GM12878 (cell line): ENCODE measurements at regions of chr11 and their contacts with region 1.

Region 1: DNA sequence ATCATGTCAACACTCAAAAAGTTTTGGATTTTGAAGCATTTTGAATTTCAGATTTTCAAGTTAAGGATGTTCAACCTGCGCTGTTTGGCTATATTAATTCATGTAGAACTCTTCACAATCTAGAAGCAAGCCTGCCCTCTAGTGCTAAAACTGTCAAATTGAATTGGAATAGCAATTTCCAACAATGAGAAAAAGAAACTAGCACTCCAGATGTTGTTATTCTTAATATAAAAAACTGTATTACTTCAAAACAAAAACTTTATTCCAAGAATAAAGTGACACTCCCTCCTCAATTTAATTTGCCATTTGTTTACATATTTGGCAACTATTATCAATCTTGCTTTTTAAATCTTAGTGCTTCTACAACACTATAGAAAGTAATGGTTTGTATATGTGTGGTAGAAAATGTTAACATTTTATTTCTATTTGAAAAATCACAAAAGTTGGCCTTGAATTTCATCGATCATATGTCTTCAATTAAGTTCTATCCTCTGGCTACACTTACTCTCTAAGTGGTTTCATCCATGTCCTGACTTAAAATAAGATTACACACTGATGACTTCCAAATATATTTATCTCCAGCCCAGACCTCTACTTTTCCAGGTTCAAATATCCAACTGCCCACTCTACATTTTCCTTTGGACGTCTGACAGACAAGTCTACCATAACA is 36.6 kb downstream of the DCUN1D5 start:
- DNase-seq: no peak
- ATAC-seq: peak; percentile 87
- H3K4me3 ChIP-seq: no peak overlapping the region
- H3K27ac ChIP-seq: no peak overlapping the region
- H3K4me1 ChIP-seq: no peaks in the 10 kb centered on the region
- H3K27me3 ChIP-seq: no peaks in the 10 kb centered on the region
- CTCF ChIP-seq: peak; percentile 58 to 68 (median 58)
- EP300 ChIP-seq: no peak
- POLR2A ChIP-seq: no peak
- RAD21 ChIP-seq: peak; percentile 73

Region 2: DNA sequence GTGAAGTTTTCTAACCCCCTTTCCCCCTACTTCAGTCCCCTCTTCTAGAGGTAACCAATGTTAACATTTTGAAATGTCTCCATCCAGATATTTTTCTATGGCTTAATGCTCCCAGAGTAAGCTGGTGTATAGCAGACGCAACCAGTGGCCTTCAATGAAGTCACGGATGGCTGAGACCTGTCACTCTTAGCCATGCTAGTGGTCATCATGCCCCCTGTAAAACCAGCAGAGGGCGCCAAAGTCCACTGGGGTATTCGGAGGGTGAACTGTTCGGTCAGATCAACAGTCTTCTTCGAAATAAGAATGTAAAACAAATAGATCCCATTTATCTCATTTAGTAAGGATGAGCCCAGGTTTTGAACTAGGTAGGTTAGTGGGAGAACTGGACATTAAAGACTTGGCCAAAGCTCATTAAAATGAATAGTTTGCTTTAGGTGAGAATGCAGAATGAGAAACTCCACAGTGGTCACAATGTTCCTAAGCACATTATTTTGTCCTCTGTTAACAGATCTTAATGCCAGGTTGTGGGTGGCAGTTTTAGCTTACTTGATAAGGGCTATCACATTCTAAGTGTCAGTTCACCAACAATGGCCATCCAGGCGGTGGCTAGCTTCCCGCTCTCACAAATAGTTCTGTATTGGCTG is 322.0 kb before region 1 on chr11:
- CTCF ChIA-PET with region 1: interaction called, 13 read pairs
- POLR2A ChIA-PET with region 1: no interaction called
- RAD21 ChIA-PET with region 1: interaction called, 5 read pairs
- SMC1A ChIA-PET with region 1: interaction called, 3 read pairs
- in situ Hi-C with region 1: no loop called
- intact Hi-C with region 1: loop called (anchors 1 kb)
- DNase-seq: no peak
- ATAC-seq: peak; percentile 100
- H3K4me3 ChIP-seq: no peak overlapping the region
- H3K27ac ChIP-seq: no peak overlapping the region
- H3K4me1 ChIP-seq: no peaks in the 10 kb centered on the region
- H3K27me3 ChIP-seq: no peaks in the 10 kb centered on the region
- CTCF ChIP-seq: peak; percentile 77 to 88 (median 83)
- EP300 ChIP-seq: no peak
- POLR2A ChIP-seq: no peak
- RAD21 ChIP-seq: peak; percentile 68

Region 3: DNA sequence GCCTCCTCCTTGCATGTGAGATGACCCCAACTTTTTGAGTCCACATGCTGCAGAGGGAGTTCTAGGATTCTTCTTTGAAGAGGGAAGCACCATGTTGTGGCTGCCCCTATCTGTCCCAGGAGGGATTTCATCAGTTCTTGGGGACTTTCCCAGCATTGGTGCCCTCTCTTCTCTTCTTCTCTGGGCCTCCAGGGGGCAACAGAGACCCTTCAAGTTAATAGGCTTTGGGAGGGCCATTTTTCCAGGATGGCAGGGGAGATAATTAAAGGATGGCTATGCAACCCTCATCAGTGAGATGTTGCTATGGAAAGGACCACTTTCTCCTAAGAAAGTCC is 260.9 kb before region 1 on chr11:
- CTCF ChIA-PET with region 1: interaction called, 5 read pairs
- POLR2A ChIA-PET with region 1: no interaction called
- RAD21 ChIA-PET with region 1: no interaction called
- SMC1A ChIA-PET with region 1: interaction called, 3 read pairs
- in situ Hi-C with region 1: no loop called
- intact Hi-C with region 1: loop called (anchors 1 kb)
- DNase-seq: no peak
- ATAC-seq: peak; percentile 99
- H3K4me3 ChIP-seq: no peak overlapping the region
- H3K27ac ChIP-seq: no peak overlapping the region
- H3K4me1 ChIP-seq: no peaks in the 10 kb centered on the region
- H3K27me3 ChIP-seq: no peaks in the 10 kb centered on the region; a peak in 1 of 4 replicates
- CTCF ChIP-seq: peak; percentile 57 to 66 (median 57)
- EP300 ChIP-seq: no peak
- POLR2A ChIP-seq: no peak
- RAD21 ChIP-seq: peak; percentile 55

Region 4: DNA sequence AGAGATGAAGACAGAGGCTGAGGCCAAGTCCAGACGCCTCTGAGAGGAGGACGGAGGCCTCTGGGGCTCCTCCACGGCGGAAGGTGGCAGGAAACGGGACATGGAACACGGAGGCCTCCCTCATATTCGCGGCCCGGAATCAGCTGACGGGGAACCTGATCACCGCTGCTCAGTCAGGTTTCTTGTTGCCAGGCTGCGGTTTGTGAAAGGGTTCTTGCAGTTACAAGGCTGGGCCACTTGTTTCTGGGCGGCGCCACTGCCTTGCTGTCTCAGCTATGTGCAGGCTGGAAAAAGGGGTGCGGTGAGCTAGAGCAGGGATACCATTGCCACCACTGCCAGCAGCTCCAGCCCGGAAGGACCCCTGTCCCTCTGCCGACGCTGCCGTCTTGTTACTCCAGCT is 247.4 kb before region 1 on chr11:
- CTCF ChIA-PET with region 1: interaction called, 3 read pairs
- POLR2A ChIA-PET with region 1: no interaction called
- RAD21 ChIA-PET with region 1: no interaction called
- SMC1A ChIA-PET with region 1: interaction called, 5 read pairs
- in situ Hi-C with region 1: no loop called
- intact Hi-C with region 1: loop called (anchors 5 kb)
- DNase-seq: no peak
- ATAC-seq: peak; percentile 87
- H3K4me3 ChIP-seq: no peak overlapping the region
- H3K27ac ChIP-seq: no peak overlapping the region
- H3K4me1 ChIP-seq: no peaks in the 10 kb centered on the region
- H3K27me3 ChIP-seq: peaks cover 0 to 2% of the 10 kb centered on the region in 2 experiments; a peak in 1 of 4 replicates
- CTCF ChIP-seq: peak; percentile 23 to 49 (median 23); a peak in 4 of 6 replicates
- EP300 ChIP-seq: no peak
- POLR2A ChIP-seq: no peak
- RAD21 ChIP-seq: no peak

Region 5: DNA sequence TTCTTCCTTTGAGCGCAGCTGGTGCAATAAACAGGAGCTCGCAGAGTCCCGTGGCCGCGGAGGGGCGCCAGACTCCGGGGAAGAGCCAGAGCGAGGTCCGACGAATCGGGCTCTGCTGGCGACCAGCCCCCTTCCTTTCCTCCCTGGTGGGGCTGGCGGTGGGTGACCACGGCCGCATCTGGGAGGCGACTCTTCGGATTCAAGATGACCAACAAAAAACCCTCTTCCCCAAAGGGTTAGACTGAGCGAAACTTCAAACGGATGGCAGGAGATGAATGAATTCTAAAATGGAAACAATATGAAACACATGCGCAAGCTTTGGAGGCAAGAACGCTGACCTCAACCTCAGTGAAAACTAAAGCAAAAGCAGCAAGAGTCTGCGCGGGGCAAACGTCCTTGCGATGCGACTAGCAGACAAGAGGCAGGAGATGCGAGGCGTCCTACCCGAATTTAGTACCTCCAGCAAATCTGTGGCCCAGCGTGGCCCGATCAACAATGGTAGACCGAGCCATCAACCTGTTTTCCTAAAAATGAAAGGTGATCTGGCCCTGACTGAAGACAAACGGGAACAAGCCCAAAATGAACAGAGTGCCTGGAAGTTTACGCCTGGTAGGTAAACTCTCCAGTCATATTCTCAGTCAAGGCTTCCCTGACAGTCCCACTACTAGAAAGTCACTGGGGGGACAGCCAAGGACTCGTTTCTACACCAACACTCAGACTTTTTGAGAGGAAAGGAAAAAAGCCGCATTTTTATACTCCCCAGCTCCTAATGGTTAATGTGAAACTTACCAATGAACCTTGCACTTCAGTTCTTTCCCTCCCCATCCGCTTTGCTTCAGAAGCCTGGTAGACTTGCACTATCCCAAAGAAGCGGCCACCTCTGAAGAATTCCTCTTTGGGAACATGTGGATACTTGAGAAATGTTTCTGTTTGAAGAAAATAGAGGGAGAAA is 223.6 kb before region 1 on chr11:
- CTCF ChIA-PET with region 1: interaction called, 10 read pairs
- POLR2A ChIA-PET with region 1: no interaction called
- RAD21 ChIA-PET with region 1: interaction called, 5 read pairs
- SMC1A ChIA-PET with region 1: interaction called, 3 read pairs
- in situ Hi-C with region 1: no loop called
- intact Hi-C with region 1: no loop called
- DNase-seq: no peak
- ATAC-seq: peak; percentile 80
- H3K4me3 ChIP-seq: no peak overlapping the region
- H3K27ac ChIP-seq: no peak overlapping the region
- H3K4me1 ChIP-seq: no peaks in the 10 kb centered on the region
- H3K27me3 ChIP-seq: peaks cover 0 to 9% of the 10 kb centered on the region in 2 experiments; a peak in 2 of 4 replicates
- CTCF ChIP-seq: peak; percentile 31 to 60 (median 53); a peak in 5 of 6 replicates
- EP300 ChIP-seq: no peak
- POLR2A ChIP-seq: no peak
- RAD21 ChIP-seq: peak; percentile 41; the same call in 1 of the 2 replicates

Region 6: GRCh38 chr11:103035791-103036434 is 19.4 kb before region 1 on chr11:
- CTCF ChIA-PET with region 1: interaction called, 35 read pairs
- POLR2A ChIA-PET with region 1: no interaction called
- RAD21 ChIA-PET with region 1: interaction called, 20 read pairs
- SMC1A ChIA-PET with region 1: interaction called, 22 read pairs
- in situ Hi-C with region 1: no loop called
- intact Hi-C with region 1: loop called (anchors 1 kb)
- DNase-seq: peak; percentile 55
- ATAC-seq: peak; percentile 95
- H3K4me3 ChIP-seq: no peak overlapping the region
- H3K27ac ChIP-seq: no peak overlapping the region
- H3K4me1 ChIP-seq: no peaks in the 10 kb centered on the region
- H3K27me3 ChIP-seq: no peaks in the 10 kb centered on the region
- CTCF ChIP-seq: peak; percentile 61 to 67 (median 62)
- EP300 ChIP-seq: no peak
- POLR2A ChIP-seq: no peak
- RAD21 ChIP-seq: peak; percentile 64

Region 7: DNA sequence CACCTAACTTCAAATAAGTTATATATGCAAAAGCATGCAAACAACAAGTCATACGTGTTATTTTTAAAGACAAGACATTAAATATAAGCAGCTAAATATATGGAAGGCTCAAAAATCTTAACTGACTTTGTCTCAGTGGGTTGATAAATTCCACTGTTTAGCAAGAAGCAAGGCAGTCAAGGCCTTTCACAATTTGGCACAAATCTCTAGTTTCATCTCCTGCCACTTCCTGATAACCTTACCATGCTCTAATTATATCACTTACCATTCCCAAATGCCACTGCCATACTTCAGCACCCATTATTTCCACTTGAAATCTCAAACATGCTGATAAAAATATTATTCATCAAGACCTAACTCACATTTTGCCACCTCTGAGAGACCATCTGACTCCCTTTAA is 11.8 kb after region 1 on chr11:
- CTCF ChIA-PET with region 1: interaction called, 5 read pairs
- POLR2A ChIA-PET with region 1: interaction called, 3 read pairs
- RAD21 ChIA-PET with region 1: no interaction called
- SMC1A ChIA-PET with region 1: interaction called, 13 read pairs
- in situ Hi-C with region 1: no loop called
- intact Hi-C with region 1: no loop called
- DNase-seq: no peak
- ATAC-seq: no peak
- H3K4me3 ChIP-seq: no peak overlapping the region
- H3K27ac ChIP-seq: no peak overlapping the region
- H3K4me1 ChIP-seq: peaks cover 9% of the 10 kb centered on the region; the same call in 1 of the 2 replicates
- H3K27me3 ChIP-seq: no peaks in the 10 kb centered on the region
- CTCF ChIP-seq: no peak
- EP300 ChIP-seq: no peak
- POLR2A ChIP-seq: no peak
- RAD21 ChIP-seq: no peak